Activated CD4-positive, alpha-beta memory T cell treated with anti-CD3 and anti-CD28 coated beads for 36 hours (primary cell): ENCODE measurements at regions of chr11 and their contacts with region 1.

Region 1: GRCh38 chr11:58654079-58654907 is 31.8 kb downstream of the CNTF start:
- DNase-seq: peak; percentile 85
- H3K4me3 Mint-ChIP-seq: no peak overlapping the region
- H3K27ac Mint-ChIP-seq: no peak overlapping the region
- H3K4me1 Mint-ChIP-seq: peaks cover 18% of the 10 kb centered on the region
- H3K27me3 Mint-ChIP-seq: peaks cover 1% of the 10 kb centered on the region

Region 2: GRCh38 chr11:58286249-58286648 is 368.0 kb before region 1 on chr11:
- CTCF ChIA-PET with region 1: no interaction called
- POLR2A ChIA-PET with region 1: no interaction called
- intact Hi-C with region 1: no loop called
- DNase-seq: no peak
- H3K4me3 Mint-ChIP-seq: no peak overlapping the region
- H3K27ac Mint-ChIP-seq: no peak overlapping the region
- H3K4me1 Mint-ChIP-seq: peaks cover 5% of the 10 kb centered on the region
- H3K27me3 Mint-ChIP-seq: peaks cover 11% of the 10 kb centered on the region

Region 3: DNA sequence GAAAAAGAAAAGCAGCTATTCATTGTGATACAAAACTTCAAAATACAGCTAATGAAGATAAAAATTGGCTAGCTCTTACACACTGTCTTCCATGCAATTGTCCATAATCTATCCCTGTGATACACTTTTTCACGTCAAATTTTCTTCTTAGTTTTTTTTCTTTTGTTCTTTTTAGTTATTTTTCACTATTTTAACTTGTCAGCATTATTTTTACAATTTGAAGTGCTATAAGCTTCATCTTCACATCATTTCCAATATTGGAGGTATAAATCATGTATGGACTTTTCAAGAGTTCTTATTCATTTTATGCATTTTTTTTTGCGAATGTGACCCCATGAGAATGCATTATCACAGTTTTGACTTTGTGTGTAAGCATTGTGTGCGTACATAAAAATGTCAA is 299.6 kb before region 1 on chr11:
- CTCF ChIA-PET with region 1: no interaction called
- POLR2A ChIA-PET with region 1: no interaction called
- intact Hi-C with region 1: no loop called
- DNase-seq: no peak
- H3K4me3 Mint-ChIP-seq: no peak overlapping the region
- H3K27ac Mint-ChIP-seq: no peak overlapping the region
- H3K4me1 Mint-ChIP-seq: no peaks in the 10 kb centered on the region
- H3K27me3 Mint-ChIP-seq: peaks cover 7% of the 10 kb centered on the region

Region 4: DNA sequence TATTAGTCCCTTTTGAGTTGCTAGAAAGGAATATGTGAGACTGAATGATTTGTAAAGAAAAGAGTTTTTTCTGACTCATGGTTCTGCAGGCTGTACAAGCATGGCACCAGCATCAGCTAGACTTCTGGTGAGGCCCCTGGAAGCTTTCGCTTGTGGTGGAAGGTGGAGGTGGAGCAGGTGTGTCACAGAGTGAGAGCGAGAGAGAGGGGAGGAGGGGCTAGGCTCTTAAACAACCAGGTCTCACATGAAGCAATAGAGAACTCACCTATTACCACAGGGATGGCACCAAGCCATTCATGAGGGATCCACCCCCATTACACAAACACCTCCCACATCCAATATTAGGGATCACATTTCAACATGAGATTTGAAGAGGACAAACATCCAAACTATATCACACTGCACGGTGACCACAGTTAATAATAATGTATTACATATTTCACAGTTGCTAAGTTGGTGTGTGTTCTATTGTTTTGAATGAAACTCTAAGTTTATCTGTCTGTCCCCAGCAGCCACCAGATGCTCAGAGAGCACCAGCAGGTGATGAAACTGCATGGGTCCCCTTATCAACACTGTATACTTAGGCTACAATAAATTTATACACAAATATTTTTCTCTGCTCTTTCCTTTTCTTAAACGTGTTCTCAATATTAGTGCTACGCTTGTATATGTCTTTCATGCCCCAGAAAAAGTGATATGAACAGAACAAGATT is 61.4 kb before region 1 on chr11:
- CTCF ChIA-PET with region 1: interaction called, 4 read pairs
- POLR2A ChIA-PET with region 1: no interaction called
- intact Hi-C with region 1: loop called (anchors 1 kb)
- DNase-seq: peak; percentile 76
- H3K4me3 Mint-ChIP-seq: no peak overlapping the region
- H3K27ac Mint-ChIP-seq: peak overlapping the region; percentile 45
- H3K4me1 Mint-ChIP-seq: peaks cover 73% of the 10 kb centered on the region
- H3K27me3 Mint-ChIP-seq: no peaks in the 10 kb centered on the region

Region 5: GRCh38 chr11:58675334-58676155 is 21.3 kb after region 1 on chr11:
- CTCF ChIA-PET with region 1: interaction called, 24 read pairs
- POLR2A ChIA-PET with region 1: no interaction called
- intact Hi-C with region 1: loop called (anchors 1 kb)
- DNase-seq: peak; percentile 82
- H3K4me3 Mint-ChIP-seq: no peak overlapping the region
- H3K27ac Mint-ChIP-seq: no peak overlapping the region
- H3K4me1 Mint-ChIP-seq: no peaks in the 10 kb centered on the region
- H3K27me3 Mint-ChIP-seq: peaks cover 4% of the 10 kb centered on the region

Region 6: DNA sequence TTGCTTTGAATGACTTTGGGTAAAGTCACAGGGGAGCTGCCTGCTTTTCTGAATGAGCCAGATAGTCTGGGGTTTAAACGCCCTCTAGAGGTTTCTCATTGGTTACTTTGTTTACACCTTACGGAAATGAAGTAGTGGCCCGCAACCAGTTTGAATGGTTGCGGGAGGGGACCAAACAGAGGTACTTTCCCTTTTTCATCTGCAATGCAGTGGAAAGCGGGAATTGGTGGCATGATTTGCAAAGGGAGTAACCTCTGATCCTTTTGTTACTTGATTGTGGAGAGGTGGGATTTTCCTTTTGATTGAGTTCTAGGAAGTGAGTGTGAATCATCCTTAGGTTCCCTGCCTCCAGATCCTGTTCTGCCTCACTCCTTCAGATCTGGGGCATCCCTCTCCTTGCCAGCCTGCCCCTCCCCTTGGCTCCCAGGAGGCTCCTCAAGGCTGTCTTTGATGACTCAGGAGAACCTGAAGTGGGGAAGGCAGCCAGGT is 269.1 kb after region 1 on chr11:
- CTCF ChIA-PET with region 1: no interaction called
- POLR2A ChIA-PET with region 1: no interaction called
- intact Hi-C with region 1: loop called (anchors 10 kb)
- DNase-seq: peak; percentile 45
- H3K4me3 Mint-ChIP-seq: no peak overlapping the region
- H3K27ac Mint-ChIP-seq: no peak overlapping the region
- H3K4me1 Mint-ChIP-seq: peaks cover 15% of the 10 kb centered on the region
- H3K27me3 Mint-ChIP-seq: peaks cover 7% of the 10 kb centered on the region

Region 7: DNA sequence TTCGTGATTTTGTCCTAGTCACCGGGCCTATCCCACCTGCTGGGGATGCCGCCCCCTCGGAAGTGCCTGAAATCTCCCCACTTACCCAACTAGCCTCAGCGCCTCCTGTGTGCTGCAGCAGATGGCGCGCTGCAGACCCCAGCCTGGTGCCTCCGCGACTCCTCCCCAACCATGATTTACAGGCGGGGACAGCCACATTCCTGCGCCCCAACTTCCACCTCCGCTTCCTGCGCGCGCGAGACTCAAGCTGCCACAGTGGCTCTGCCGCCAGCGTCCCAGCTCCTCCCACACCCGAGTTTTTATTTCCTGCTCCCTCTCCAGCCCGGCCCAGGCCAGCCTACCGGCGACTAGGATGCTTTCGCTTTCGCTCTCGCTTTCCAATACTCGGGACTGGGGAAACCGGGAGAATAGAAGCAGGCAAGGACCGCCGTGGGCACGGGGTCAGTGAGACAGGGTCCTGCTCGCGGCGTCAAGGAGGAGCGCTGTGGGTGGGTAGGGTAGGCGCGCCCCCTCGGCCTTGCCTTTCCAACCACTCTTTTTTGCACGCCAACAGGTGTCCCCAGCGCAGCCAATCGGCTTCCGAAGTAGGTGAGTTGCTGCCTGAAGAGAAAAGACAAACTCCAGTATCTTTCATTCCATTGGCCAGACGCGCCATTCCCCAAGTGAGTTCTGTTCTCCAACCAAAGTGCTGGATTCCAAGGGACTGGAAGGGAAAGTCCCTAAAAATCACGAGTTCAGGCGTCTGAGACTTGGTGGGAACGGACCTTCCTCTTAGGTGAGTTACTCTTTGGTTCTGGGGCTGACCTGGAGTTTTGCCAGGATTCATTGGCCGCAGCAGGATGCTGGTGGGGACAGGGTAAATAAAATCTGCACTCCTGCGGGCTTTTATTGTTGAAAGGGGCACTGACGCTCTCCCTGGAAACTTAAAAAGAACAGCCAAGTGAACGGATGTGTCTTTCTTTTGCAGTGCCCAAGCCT is 488.5 kb after region 1 on chr11 and contains the start of gene FAM111A:
- CTCF ChIA-PET with region 1: no interaction called
- POLR2A ChIA-PET with region 1: no interaction called
- intact Hi-C with region 1: loop called (anchors 10 kb)
- DNase-seq: peak; percentile 90
- H3K4me3 Mint-ChIP-seq: peak within 1 kb of the TSS; percentile 94
- H3K27ac Mint-ChIP-seq: peak within 1 kb of the TSS; percentile 93
- H3K4me1 Mint-ChIP-seq: peaks cover 50% of the 10 kb centered on the region
- H3K27me3 Mint-ChIP-seq: no peaks in the 10 kb centered on the region
- total RNA-seq, gene FAM111A: 87.6 to 87.8 TPM